ENCODE measurements at regions of chr4 and their contacts with region 1.

Region 1: GRCh38 chr4:87422104-87423052 is at the start of gene NUDT9:
- DNase-seq: peak; percentile 98
- ATAC-seq: peak; percentile 96 to 97 (median 96)
- H3K4me3 ChIP-seq: peak within 1 kb of the TSS; percentile 86
- H3K27ac ChIP-seq: peak within 1 kb of the TSS; percentile 94
- H3K4me1 ChIP-seq: peaks cover 5% of the 10 kb centered on the region
- H3K27me3 ChIP-seq: no peaks in the 10 kb centered on the region
- CTCF ChIP-seq: no peak
- total RNA-seq, gene NUDT9: 20.5 to 33.3 (median 24.0) TPM

Region 2: DNA sequence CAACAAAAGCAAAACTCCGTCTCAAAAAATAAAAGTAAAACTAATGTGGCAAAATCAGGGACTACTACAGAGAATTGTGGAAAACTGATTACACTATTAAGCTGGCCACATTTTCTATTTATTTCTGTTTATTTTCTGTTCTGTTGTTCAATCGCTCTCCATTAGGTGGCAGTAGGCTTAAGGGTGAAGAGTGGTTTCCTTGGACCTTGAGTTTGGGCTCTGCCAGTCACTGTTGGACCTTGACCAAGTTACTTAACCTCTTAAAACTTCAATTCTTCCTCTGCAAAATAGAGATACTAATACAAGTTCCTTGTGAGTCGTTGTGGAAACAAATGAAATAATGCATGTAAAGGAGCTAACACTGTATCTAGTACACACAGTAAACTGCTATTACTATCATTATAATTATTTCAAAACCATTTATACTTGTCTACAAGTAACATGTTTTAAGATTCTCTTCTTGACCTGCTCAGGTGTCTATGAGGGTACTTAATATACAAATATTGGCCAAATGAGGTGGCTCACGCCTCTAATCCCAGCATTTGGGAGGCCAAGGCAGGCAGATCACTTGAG is 46.6 kb before region 1 on chr4:
- intact Hi-C with region 1: loop called in 1 of 2 experiments (anchors 5 kb)
- DNase-seq: no peak
- ATAC-seq: peak; percentile 39 to 87 (median 68)
- H3K4me3 ChIP-seq: no peak overlapping the region
- H3K27ac ChIP-seq: no peak overlapping the region
- H3K4me1 ChIP-seq: no peaks in the 10 kb centered on the region
- H3K27me3 ChIP-seq: no peaks in the 10 kb centered on the region
- CTCF ChIP-seq: peak; percentile 69

Region 3: DNA sequence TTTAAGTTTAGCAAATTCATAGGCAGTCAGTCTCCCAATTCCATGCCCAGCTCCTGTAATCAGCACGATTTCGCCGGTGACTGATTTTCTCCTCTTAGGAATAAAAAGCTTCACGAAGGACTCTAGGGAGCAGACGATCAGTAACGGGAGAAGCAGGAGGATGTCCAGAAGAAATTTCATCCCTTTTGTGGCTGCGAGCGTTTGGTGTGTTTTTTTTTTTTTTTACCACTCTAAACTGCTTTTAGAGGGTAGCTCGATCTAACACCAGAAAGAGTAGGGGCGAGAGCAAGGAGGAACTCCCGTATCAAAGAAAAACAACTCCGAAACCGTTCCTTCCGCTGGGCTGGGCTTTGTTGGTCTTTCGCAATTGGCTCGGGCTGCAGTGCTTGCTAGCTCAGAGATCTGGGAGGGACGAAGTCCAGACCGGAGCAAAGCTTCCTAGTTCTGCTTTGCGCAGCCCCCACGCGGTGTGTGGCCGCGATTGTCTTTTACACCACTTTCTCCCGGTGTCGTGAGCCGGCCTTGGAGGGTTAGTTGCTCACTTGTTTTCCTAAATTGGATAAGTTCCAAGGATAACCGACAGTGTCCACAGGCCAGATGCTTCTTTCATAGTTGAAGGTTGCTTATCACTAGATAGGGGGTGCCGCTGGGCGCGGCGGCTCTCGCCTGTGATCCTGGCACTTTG is 31.3 kb before region 1 on chr4 and contains the start of gene HSD17B11:
- intact Hi-C with region 1: loop called in 1 of 2 experiments (anchors 1 kb)
- DNase-seq: peak; percentile 87 to 93
- ATAC-seq: peak; percentile 90 to 98 (median 94)
- H3K4me3 ChIP-seq: peak within 1 kb of the TSS; percentile 76
- H3K27ac ChIP-seq: peak within 1 kb of the TSS; percentile 69
- H3K4me1 ChIP-seq: peaks cover 7% of the 10 kb centered on the region
- H3K27me3 ChIP-seq: no peaks in the 10 kb centered on the region
- CTCF ChIP-seq: peak; percentile 11
- total RNA-seq, gene HSD17B11: 5.1 to 10.5 (median 7.1) TPM

Measured in psoas muscle (tissue), 8 donors.